ENCODE measurements at regions of chr11 and their contacts with region 1.

Region 1: DNA sequence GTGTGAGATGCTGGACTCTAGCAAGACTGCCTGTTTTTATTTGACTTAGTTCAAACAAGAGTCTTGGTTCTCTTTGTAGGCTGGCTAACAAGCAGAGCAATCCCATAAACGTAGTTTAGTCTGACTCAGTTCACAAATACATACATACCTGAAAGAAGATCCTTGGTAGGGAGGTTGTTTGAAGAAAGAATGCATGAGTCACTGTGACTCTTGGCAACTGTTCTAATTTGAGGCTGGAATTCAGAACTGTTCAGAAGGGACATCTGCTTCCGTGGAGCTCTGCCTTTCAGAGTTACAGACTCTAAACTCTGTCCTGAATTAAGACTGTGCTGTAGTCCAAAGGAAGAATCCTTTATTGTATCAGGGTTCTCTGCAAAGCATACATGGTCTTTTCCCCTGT is 32.2 kb downstream of the C2CD3 start:
- DNase-seq: peak; percentile 86
- H3K4me3 ChIP-seq: no peak overlapping the region
- H3K27ac ChIP-seq: peak overlapping the region; percentile 37
- H3K4me1 ChIP-seq: peaks cover 26% of the 10 kb centered on the region
- H3K27me3 ChIP-seq: no peaks in the 10 kb centered on the region
- CTCF ChIP-seq: no peak
- POLR2A ChIP-seq: no peak

Region 2: GRCh38 chr11:74123008-74123448 is 15.5 kb before region 1 on chr11:
- CTCF ChIA-PET with region 1: interaction called, 4 read pairs
- POLR2A ChIA-PET with region 1: interaction called, 5 read pairs
- dilution Hi-C with region 1: no loop called
- intact Hi-C with region 1: loop called (anchors 1 kb)
- DNase-seq: no peak
- H3K4me3 ChIP-seq: no peak overlapping the region
- H3K27ac ChIP-seq: no peak overlapping the region
- H3K4me1 ChIP-seq: no peaks in the 10 kb centered on the region
- H3K27me3 ChIP-seq: no peaks in the 10 kb centered on the region
- CTCF ChIP-seq: no peak
- POLR2A ChIP-seq: no peak

Region 3: GRCh38 chr11:74170694-74171629 is 32.4 kb after region 1 on chr11 and contains the starts of genes C2CD3 and PPME1:
- CTCF ChIA-PET with region 1: interaction called, 4 read pairs
- POLR2A ChIA-PET with region 1: no interaction called
- dilution Hi-C with region 1: no loop called
- intact Hi-C with region 1: loop called (anchors 1 kb)
- DNase-seq: peak; percentile 100
- H3K4me3 ChIP-seq: peak within 1 kb of the TSS; percentile 67 to 93 (median 74)
- H3K27ac ChIP-seq: peak within 1 kb of the TSS; percentile 84
- H3K4me1 ChIP-seq: peaks cover 17% of the 10 kb centered on the region
- H3K27me3 ChIP-seq: no peaks in the 10 kb centered on the region
- CTCF ChIP-seq: peak in 1 of 2 donors; percentile 5
- POLR2A ChIP-seq: no peak
- total RNA-seq, gene C2CD3: 26.2 and 36.6 TPM in 2 replicates
- total RNA-seq, gene PPME1: 35.0 and 37.2 TPM in 2 replicates

Region 4: DNA sequence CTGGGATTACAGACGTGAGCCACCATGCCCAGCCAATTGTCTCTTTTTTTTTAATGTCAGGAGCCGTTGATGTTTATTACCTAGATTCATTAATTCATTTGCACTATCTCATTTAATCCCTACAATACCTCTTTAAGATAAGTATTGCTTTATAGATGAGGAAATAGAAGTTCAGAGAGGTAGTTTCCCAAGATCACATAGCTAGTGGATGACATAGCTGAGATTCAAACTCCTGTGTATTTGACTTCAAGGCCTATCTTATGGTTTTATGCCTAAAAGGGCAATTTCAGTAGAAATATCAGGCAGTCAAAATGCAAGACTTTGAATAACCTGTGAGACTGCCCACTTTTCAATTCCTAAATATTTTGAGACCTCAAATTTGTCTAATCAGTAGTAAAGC is 99.0 kb after region 1 on chr11:
- CTCF ChIA-PET with region 1: no interaction called
- POLR2A ChIA-PET with region 1: no interaction called
- dilution Hi-C with region 1: no loop called
- intact Hi-C with region 1: no loop called
- DNase-seq: no peak
- H3K4me3 ChIP-seq: no peak overlapping the region
- H3K27ac ChIP-seq: no peak overlapping the region
- H3K4me1 ChIP-seq: no peaks in the 10 kb centered on the region
- H3K27me3 ChIP-seq: no peaks in the 10 kb centered on the region
- CTCF ChIP-seq: no peak
- POLR2A ChIP-seq: no peak